Activated B cell treated with CpG ODN at 0.5 μM for 24 hours (primary cell): ENCODE measurements at regions of chr12 and their contacts with region 1.

Region 1: GRCh38 chr12:14193639-14194038 is 171.8 kb upstream of the ATF7IP start:
- DNase-seq: no peak
- ATAC-seq: no peak
- H3K4me3 Mint-ChIP-seq: no peak overlapping the region
- H3K27ac Mint-ChIP-seq: no peak overlapping the region
- H3K4me1 Mint-ChIP-seq: peaks cover 33% of the 10 kb centered on the region
- H3K27me3 Mint-ChIP-seq: no peaks in the 10 kb centered on the region
- CTCF ChIP-seq: no peak

Region 2: DNA sequence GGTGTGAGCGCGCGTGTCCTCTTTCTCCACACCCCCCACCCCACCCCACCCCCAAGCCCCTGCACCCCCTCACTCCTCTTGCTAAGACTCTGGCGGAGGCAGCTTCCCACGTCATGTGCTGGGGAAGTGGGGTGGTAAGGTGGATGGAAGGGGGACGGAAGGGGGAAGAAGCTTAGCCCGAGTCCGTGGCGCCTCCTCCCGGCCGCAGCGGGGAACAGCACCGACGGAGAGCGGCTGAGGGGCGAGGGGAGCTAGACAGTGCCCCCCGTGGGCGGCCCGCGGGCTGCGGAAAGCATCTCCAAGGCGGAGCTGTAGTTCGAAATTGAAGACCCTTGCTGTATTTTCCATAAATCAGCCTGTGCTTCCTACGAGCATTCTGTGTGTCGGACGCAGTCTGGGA is 211.6 kb before region 1 on chr12:
- CTCF ChIA-PET with region 1: no interaction called
- POLR2A ChIA-PET with region 1: no interaction called
- intact Hi-C with region 1: no loop called
- DNase-seq: no peak
- ATAC-seq: no peak
- H3K4me3 Mint-ChIP-seq: no peak overlapping the region
- H3K27ac Mint-ChIP-seq: no peak overlapping the region
- H3K4me1 Mint-ChIP-seq: peaks cover 19% of the 10 kb centered on the region
- H3K27me3 Mint-ChIP-seq: peaks cover 62% of the 10 kb centered on the region
- CTCF ChIP-seq: no peak

Region 3: GRCh38 chr12:14153803-14154202 is 39.8 kb before region 1 on chr12:
- CTCF ChIA-PET with region 1: no interaction called
- POLR2A ChIA-PET with region 1: no interaction called
- intact Hi-C with region 1: no loop called
- DNase-seq: no peak
- ATAC-seq: peak; percentile 7
- H3K4me3 Mint-ChIP-seq: peak overlapping the region; percentile 54
- H3K27ac Mint-ChIP-seq: peak overlapping the region; percentile 27
- H3K4me1 Mint-ChIP-seq: peaks cover 74% of the 10 kb centered on the region
- H3K27me3 Mint-ChIP-seq: no peaks in the 10 kb centered on the region
- CTCF ChIP-seq: no peak

Region 4: GRCh38 chr12:14216405-14217294 is 23.0 kb after region 1 on chr12:
- CTCF ChIA-PET with region 1: no interaction called
- POLR2A ChIA-PET with region 1: interaction called, 3 read pairs
- intact Hi-C with region 1: loop called (anchors 2 kb)
- DNase-seq: no peak
- ATAC-seq: peak; percentile 62
- H3K4me3 Mint-ChIP-seq: peak overlapping the region; percentile 70
- H3K27ac Mint-ChIP-seq: peak overlapping the region; percentile 82
- H3K4me1 Mint-ChIP-seq: peaks cover 34% of the 10 kb centered on the region
- H3K27me3 Mint-ChIP-seq: no peaks in the 10 kb centered on the region
- CTCF ChIP-seq: no peak

Region 5: GRCh38 chr12:14554281-14555007 is 360.8 kb after region 1 on chr12:
- CTCF ChIA-PET with region 1: no interaction called
- POLR2A ChIA-PET with region 1: no interaction called
- intact Hi-C with region 1: no loop called
- DNase-seq: no peak
- ATAC-seq: no peak
- H3K4me3 Mint-ChIP-seq: no peak overlapping the region
- H3K27ac Mint-ChIP-seq: no peak overlapping the region
- H3K4me1 Mint-ChIP-seq: peaks cover 18% of the 10 kb centered on the region
- H3K27me3 Mint-ChIP-seq: no peaks in the 10 kb centered on the region
- CTCF ChIP-seq: no peak